ENCODE measurements at regions of chrX and their contacts with region 1.

Region 1: DNA sequence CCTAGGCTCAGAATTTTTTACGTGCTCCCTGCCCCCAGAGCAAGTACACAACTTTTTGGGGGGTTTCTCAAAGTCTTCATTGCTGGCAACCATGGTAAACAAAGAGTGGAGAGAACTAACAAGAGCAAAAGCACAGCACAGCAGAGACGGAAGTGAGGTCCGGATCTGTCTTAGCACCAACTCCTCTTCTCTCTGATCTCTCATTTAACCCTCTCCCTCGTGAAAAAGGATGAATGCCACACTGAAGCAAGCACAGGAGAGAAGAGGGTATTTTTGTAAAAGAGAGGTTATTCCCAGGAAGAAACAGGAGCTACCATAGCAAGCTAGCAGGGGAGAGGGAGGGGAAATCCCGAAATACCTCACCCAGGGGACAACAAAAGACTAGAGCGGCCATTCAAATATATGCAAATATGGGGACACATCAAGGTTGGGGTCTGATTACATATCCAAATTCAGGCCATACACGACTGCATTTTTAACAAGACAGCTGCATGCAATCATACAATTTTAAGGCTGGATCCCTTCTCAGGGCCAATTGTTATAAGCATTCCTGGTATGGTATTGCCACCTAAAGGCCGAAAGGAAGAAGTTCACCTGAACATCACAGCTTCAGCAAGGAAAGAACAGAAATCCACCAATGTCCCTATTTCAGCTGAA is 46.6 kb downstream of the CD40LG start:
- DNase-seq: no peak
- ATAC-seq: peak; percentile 78
- H3K4me3 Mint-ChIP-seq: peak overlapping the region; percentile 53
- H3K27ac Mint-ChIP-seq: peak overlapping the region; percentile 90
- H3K4me1 Mint-ChIP-seq: peaks cover 45% of the 10 kb centered on the region
- H3K27me3 Mint-ChIP-seq: no peaks in the 10 kb centered on the region
- CTCF ChIP-seq: no peak

Region 2: GRCh38 chrX:136162831-136163570 is 531.6 kb before region 1 on chrX:
- CTCF ChIA-PET with region 1: no interaction called
- POLR2A ChIA-PET with region 1: no interaction called
- intact Hi-C with region 1: loop called (anchors 10 kb)
- DNase-seq: peak; percentile 14
- ATAC-seq: peak; percentile 50
- H3K4me3 Mint-ChIP-seq: no peak overlapping the region
- H3K27ac Mint-ChIP-seq: no peak overlapping the region
- H3K4me1 Mint-ChIP-seq: no peaks in the 10 kb centered on the region
- H3K27me3 Mint-ChIP-seq: no peaks in the 10 kb centered on the region
- CTCF ChIP-seq: no peak

Region 3: GRCh38 chrX:136268051-136269048 is 426.2 kb before region 1 on chrX:
- CTCF ChIA-PET with region 1: interaction called, 3 read pairs
- POLR2A ChIA-PET with region 1: no interaction called
- intact Hi-C with region 1: loop called (anchors 5 kb)
- DNase-seq: no peak
- ATAC-seq: peak; percentile 45
- H3K4me3 Mint-ChIP-seq: no peak overlapping the region
- H3K27ac Mint-ChIP-seq: no peak overlapping the region
- H3K4me1 Mint-ChIP-seq: peaks cover 8% of the 10 kb centered on the region
- H3K27me3 Mint-ChIP-seq: no peaks in the 10 kb centered on the region
- CTCF ChIP-seq: no peak

Region 4: DNA sequence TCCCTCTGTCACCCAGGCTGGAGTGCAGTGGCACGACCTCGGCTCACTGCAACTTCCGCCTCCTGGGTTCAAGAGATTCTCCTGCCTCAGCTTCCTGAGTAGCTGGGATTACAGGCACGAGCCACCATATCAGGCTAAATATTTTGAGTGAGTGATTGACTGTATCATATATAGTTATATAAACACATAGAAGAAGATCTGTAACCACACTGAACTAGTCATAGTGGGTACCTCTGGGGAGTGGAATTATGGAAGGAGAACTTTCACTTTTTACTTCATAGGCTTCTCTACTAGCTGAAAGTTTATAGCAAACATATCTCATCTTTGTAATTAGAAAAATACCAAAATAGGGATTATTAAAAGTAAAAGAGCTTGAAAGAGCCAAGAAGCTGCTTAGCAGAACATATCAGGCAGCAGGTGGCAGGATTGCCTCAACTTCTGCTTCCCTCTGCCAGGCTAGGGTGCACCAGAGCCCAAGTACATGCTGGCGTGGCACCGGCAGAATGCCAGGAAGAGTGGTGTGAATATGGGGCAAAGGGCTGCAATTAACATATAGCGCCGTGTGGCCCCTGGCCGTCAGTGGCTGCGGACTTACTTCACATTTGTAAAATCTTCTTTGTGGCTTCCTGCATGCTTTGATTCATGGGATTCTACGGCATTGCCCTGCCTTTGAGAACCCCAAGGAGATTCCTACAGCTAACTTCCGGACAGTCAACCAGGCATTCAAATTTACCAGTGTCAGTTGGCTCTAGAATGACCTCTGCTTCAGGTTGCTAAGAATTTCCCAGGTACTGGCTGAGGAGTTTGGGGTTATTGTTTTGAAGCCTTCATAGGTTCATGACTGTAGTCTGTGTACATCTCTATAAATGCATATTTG is 86.0 kb before region 1 on chrX:
- CTCF ChIA-PET with region 1: interaction called, 52 read pairs
- POLR2A ChIA-PET with region 1: interaction called, 5 read pairs
- intact Hi-C with region 1: loop called (anchors 1 kb)
- DNase-seq: peak; percentile 16
- ATAC-seq: peak; percentile 60
- H3K4me3 Mint-ChIP-seq: no peak overlapping the region
- H3K27ac Mint-ChIP-seq: no peak overlapping the region
- H3K4me1 Mint-ChIP-seq: peaks cover 5% of the 10 kb centered on the region
- H3K27me3 Mint-ChIP-seq: no peaks in the 10 kb centered on the region
- CTCF ChIP-seq: no peak

Region 5: GRCh38 chrX:136674270-136674985 is 20.1 kb before region 1 on chrX:
- CTCF ChIA-PET with region 1: no interaction called
- POLR2A ChIA-PET with region 1: no interaction called
- intact Hi-C with region 1: loop called (anchors 1 kb)
- DNase-seq: no peak
- ATAC-seq: no peak
- H3K4me3 Mint-ChIP-seq: no peak overlapping the region
- H3K27ac Mint-ChIP-seq: peak overlapping the region; percentile 64
- H3K4me1 Mint-ChIP-seq: peaks cover 29% of the 10 kb centered on the region
- H3K27me3 Mint-ChIP-seq: no peaks in the 10 kb centered on the region
- CTCF ChIP-seq: no peak